ENCODE measurements at regions of chr12 and their contacts with region 1.

Region 1: GRCh38 chr12:76348079-76348901 is at the start of gene BBS10:
- DNase-seq: peak; percentile 66 to 92 (median 78)
- ATAC-seq: peak; percentile 98
- H3K4me3 ChIP-seq: peak within 1 kb of the TSS; percentile 55
- H3K27ac ChIP-seq: peak within 1 kb of the TSS; percentile 78
- H3K4me1 ChIP-seq: peaks cover 8 to 13% of the 10 kb centered on the region in 2 experiments; a peak in 4 of 5 replicates
- H3K27me3 ChIP-seq: no peaks in the 10 kb centered on the region
- CTCF ChIP-seq: peak; percentile 41 to 62 (median 43)
- EP300 ChIP-seq: no peak
- POLR2A ChIP-seq: peak; percentile 88
- RAD21 ChIP-seq: peak in 1 of 2 experiments; percentile 41; a peak in 3 of 4 replicates
- polyA plus RNA-seq, gene BBS10: 2.3 to 2.7 TPM

Region 2: GRCh38 chr12:75480469-75480949 is 867.8 kb before region 1 on chr12 and contains the start of gene GLIPR1:
- CTCF ChIA-PET with region 1: no interaction called
- POLR2A ChIA-PET with region 1: no interaction called
- in situ Hi-C with region 1: no loop called
- intact Hi-C with region 1: loop called (anchors 10 kb)
- DNase-seq: peak in 2 of 4 experiments; percentile 13 to 24
- ATAC-seq: peak; percentile 73
- H3K4me3 ChIP-seq: no peak within 1 kb of the TSS
- H3K27ac ChIP-seq: peak within 1 kb of the TSS; percentile 61; the same call in 2 of the 3 replicates
- H3K4me1 ChIP-seq: peaks cover 0 to 6% of the 10 kb centered on the region in 2 experiments; a peak in 4 of 5 replicates
- H3K27me3 ChIP-seq: no peaks in the 10 kb centered on the region
- CTCF ChIP-seq: no peak
- EP300 ChIP-seq: no peak
- POLR2A ChIP-seq: no peak
- RAD21 ChIP-seq: no peak
- polyA plus RNA-seq, gene GLIPR1: 2.0 to 2.1 TPM

Region 3: DNA sequence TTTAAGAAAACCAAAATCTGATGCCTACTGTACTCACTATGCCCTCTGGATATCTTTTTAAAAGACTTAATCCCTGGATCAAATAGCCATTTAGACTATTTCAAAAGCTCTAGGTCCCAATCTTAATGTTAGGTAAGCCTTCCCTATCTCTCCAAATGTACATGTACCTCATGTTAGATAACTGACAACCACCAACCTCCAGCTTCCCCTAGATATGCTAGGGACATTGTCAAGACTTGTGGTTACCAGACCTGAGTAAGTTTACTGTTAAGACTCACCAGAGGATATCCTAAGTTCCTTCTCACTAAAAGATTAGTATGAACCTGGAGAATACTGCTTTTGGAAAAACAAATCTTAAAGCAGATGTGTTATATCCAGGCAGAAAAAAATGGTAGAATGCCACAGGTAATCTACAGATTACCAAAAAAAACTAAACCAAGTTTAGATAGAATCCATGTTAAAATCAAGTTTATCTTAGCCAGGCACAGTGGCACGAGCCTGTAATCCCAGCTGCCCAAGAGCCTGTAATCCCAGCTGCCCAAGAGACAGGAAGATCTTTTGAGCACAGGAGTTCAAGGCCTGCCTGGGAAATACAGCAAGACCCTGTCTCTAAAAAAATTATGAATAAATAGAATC is 273.5 kb before region 1 on chr12:
- CTCF ChIA-PET with region 1: no interaction called
- POLR2A ChIA-PET with region 1: no interaction called
- in situ Hi-C with region 1: loop called (anchors 10 kb)
- intact Hi-C with region 1: no loop called
- DNase-seq: peak in 3 of 4 experiments; percentile 28 to 73 (median 53)
- ATAC-seq: peak; percentile 80
- H3K4me3 ChIP-seq: no peak overlapping the region
- H3K27ac ChIP-seq: peak overlapping the region; percentile 25; the same call in 2 of the 3 replicates
- H3K4me1 ChIP-seq: peaks cover 0 to 15% of the 10 kb centered on the region in 2 experiments; a peak in 3 of 5 replicates
- H3K27me3 ChIP-seq: no peaks in the 10 kb centered on the region
- CTCF ChIP-seq: no peak
- EP300 ChIP-seq: peak; percentile 26; the same call in 1 of the 2 replicates
- POLR2A ChIP-seq: no peak
- RAD21 ChIP-seq: no peak

Region 4: DNA sequence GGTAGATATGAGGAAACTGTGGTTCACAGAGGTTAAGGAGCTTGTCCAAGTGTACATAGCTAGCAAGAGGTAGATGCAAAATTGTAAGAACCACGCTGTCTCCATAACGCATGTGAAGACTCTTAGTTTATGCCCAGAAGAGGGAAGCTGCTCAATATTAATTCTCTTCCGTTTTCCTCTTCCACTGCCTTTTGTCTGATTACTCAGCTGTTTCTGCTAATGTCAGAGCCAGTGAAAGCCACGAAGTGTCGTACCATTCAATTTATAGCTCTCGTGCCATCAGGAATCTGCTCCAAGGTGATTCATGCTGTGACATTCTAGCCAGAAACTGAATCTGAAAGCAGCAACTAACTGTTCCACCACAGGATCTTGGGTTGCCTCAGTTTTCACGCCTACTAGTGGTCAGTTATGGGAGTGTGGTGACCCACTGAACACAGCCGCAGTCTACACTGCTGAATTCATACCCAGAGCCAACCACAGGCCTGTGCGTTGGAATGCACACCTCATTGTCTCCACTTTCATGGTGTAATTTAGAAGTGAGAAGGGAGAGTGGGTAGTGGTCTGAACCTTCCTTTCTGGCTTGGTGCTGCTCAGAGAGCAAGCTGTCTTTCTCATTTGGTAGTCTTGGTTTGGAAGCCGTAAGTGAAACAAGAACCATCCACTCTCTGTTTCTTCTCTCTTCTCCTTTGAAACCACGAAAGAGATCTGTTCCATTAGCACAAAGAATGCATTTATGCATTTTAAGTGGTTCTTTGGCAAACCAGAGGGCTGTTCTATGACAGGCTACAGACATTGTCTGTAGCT is 189.6 kb before region 1 on chr12:
- CTCF ChIA-PET with region 1: no interaction called
- POLR2A ChIA-PET with region 1: no interaction called
- in situ Hi-C with region 1: loop called (anchors 10 kb)
- intact Hi-C with region 1: loop called (anchors 2 kb)
- DNase-seq: peak; percentile 71 to 86 (median 76)
- ATAC-seq: peak; percentile 100
- H3K4me3 ChIP-seq: no peak overlapping the region
- H3K27ac ChIP-seq: peak overlapping the region; percentile 48
- H3K4me1 ChIP-seq: peaks cover 10 to 23% of the 10 kb centered on the region in 2 experiments
- H3K27me3 ChIP-seq: no peaks in the 10 kb centered on the region
- CTCF ChIP-seq: peak; percentile 81 to 93 (median 81)
- EP300 ChIP-seq: 0 out of 2 replicates have a peak, but pooled peaks have one; percentile 28
- POLR2A ChIP-seq: no peak
- RAD21 ChIP-seq: peak; percentile 73 to 89

Region 5: GRCh38 chr12:76455582-76456345 is 107.5 kb after region 1 on chr12:
- CTCF ChIA-PET with region 1: no interaction called
- POLR2A ChIA-PET with region 1: no interaction called
- in situ Hi-C with region 1: no loop called
- intact Hi-C with region 1: loop called (anchors 1 kb)
- DNase-seq: peak; percentile 14 to 66 (median 18)
- ATAC-seq: peak; percentile 94
- H3K4me3 ChIP-seq: no peak overlapping the region
- H3K27ac ChIP-seq: no peak overlapping the region
- H3K4me1 ChIP-seq: no peaks in the 10 kb centered on the region
- H3K27me3 ChIP-seq: no peaks in the 10 kb centered on the region
- CTCF ChIP-seq: peak; percentile 34 to 72 (median 51); a peak in 5 of 6 replicates
- EP300 ChIP-seq: no peak
- POLR2A ChIP-seq: 0 out of 2 replicates have a peak, but pooled peaks have one; percentile 27
- RAD21 ChIP-seq: peak; percentile 71 to 88

Measured in K562 (cell line).